Heart left ventricle (tissue), 16 donors: ENCODE measurements at regions of chr4 and their contacts with region 1.

Region 1: DNA sequence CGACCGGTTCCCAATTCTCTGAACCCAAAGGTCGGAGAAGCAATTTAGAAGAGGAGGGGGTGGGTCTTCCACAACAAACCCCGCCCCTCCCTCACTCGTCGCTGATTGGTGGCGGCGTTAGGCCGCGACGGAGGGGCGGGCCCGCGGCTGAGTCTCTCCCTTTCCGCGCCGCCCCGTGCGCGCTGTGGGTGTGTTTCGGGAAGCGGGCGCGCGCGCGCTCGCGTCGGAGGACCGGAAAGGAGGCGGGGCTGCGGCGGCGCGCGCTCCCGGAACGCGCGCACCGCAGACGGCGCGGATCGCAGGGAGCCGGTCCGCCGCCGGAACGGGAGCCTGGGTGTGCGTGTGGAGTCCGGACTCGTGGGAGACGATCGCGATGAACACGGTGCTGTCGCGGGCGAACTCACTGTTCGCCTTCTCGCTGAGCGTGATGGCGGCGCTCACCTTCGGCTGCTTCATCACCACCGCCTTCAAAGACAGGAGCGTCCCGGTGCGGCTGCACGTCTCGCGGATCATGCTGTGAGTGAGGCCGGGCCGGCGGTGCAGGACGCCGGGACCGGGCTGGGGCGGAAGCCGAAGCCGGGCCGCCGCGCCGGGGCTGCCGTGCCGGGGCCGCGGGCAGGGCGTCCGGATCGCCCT is at the start of gene SPCS3:
- DNase-seq: peak; percentile 96 to 98 (median 97)
- ATAC-seq: peak; percentile 99 to 100 (median 99)
- H3K4me3 ChIP-seq: peak within 1 kb of the TSS; percentile 73 to 95 (median 85)
- H3K27ac ChIP-seq: peak within 1 kb of the TSS; percentile 88 to 100 (median 97)
- H3K4me1 ChIP-seq: peaks cover 0 to 49% (median 36%) of the 10 kb centered on the region in 12 donors
- H3K27me3 ChIP-seq: no peaks in the 10 kb centered on the region
- CTCF ChIP-seq: no peak
- POLR2A ChIP-seq: peak; percentile 49 to 91
- total RNA-seq, gene SPCS3: 40.6 to 200 (median 81.6) TPM

Region 2: GRCh38 chr4:176185067-176185466 is 134.8 kb before region 1 on chr4:
- intact Hi-C with region 1: loop called in 2 of 10 experiments (anchors 5 to 10 kb)
- DNase-seq: no peak
- ATAC-seq: peak; percentile 47 to 86 (median 78)
- H3K4me3 ChIP-seq: no peak overlapping the region
- H3K27ac ChIP-seq: peak overlapping the region in 1 of 12 donors; percentile 28
- H3K4me1 ChIP-seq: peaks cover 0 to 7% (median 0%) of the 10 kb centered on the region in 12 donors
- H3K27me3 ChIP-seq: no peaks in the 10 kb centered on the region
- CTCF ChIP-seq: no peak
- POLR2A ChIP-seq: no peak

Region 3: GRCh38 chr4:176230836-176231235 is 89.0 kb before region 1 on chr4:
- intact Hi-C with region 1: loop called in 2 of 10 experiments (anchors 5 to 10 kb)
- DNase-seq: no peak
- ATAC-seq: peak; percentile 56 to 88 (median 68)
- H3K4me3 ChIP-seq: peak overlapping the region in 6 of 12 donors; percentile 11 to 32 (median 22)
- H3K27ac ChIP-seq: peak overlapping the region in 11 of 12 donors; percentile 11 to 79 (median 62)
- H3K4me1 ChIP-seq: peaks cover 0 to 25% (median 8%) of the 10 kb centered on the region in 12 donors
- H3K27me3 ChIP-seq: no peaks in the 10 kb centered on the region
- CTCF ChIP-seq: no peak
- POLR2A ChIP-seq: no peak

Region 4: GRCh38 chr4:176256921-176257320 is 62.9 kb before region 1 on chr4:
- intact Hi-C with region 1: no loop called
- DNase-seq: no peak
- ATAC-seq: no peak
- H3K4me3 ChIP-seq: no peak overlapping the region
- H3K27ac ChIP-seq: peak overlapping the region in 1 of 12 donors; percentile 55
- H3K4me1 ChIP-seq: no peaks in the 10 kb centered on the region
- H3K27me3 ChIP-seq: no peaks in the 10 kb centered on the region
- CTCF ChIP-seq: no peak
- POLR2A ChIP-seq: no peak

Region 5: DNA sequence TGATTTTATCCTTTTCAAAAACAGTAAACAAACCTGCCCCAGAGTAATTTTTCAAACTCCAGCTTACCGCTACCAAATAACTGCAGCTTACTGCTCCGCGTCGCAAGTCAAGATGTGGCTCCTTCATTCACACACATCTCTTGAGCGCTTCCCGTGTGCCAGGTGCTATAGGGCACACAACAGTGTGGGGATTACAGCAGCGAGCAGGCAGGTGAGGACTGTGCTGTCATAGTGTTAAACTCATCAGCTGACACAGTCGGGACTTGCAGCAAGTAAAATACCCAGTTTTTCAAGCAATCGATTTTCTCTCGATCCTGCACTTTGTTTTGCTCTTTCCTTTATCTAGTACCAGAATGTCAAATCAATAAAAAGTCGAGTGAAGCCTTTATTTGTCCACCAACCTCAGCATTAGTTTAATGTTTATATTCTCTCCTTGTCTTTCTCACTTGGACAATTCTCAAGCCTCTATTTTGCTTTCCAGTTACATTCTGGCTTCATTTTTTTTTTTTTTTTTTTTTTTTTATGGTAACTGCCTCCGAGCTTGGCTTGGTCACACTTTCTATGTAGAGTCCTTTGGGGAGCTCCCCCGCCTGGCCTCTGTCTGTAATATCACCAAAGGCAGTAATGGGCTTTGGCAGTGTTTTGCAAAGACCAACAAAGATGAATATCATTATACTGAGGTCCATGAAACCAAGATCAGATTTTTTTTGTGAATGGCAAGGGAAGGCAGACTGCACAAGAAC is 42.5 kb before region 1 on chr4:
- intact Hi-C with region 1: loop called in 1 of 10 experiments (anchors 5 kb)
- DNase-seq: peak in 4 of 5 donors; percentile 33 to 58 (median 48)
- ATAC-seq: peak in 3 of 4 donors; percentile 83 to 88 (median 83)
- H3K4me3 ChIP-seq: peak overlapping the region in 1 of 12 donors; percentile 3
- H3K27ac ChIP-seq: peak overlapping the region in 1 of 12 donors; percentile 70
- H3K4me1 ChIP-seq: peaks cover 0 to 7% (median 0%) of the 10 kb centered on the region in 12 donors
- H3K27me3 ChIP-seq: no peaks in the 10 kb centered on the region
- CTCF ChIP-seq: peak; percentile 26 to 67 (median 52)
- POLR2A ChIP-seq: no peak

Region 6: DNA sequence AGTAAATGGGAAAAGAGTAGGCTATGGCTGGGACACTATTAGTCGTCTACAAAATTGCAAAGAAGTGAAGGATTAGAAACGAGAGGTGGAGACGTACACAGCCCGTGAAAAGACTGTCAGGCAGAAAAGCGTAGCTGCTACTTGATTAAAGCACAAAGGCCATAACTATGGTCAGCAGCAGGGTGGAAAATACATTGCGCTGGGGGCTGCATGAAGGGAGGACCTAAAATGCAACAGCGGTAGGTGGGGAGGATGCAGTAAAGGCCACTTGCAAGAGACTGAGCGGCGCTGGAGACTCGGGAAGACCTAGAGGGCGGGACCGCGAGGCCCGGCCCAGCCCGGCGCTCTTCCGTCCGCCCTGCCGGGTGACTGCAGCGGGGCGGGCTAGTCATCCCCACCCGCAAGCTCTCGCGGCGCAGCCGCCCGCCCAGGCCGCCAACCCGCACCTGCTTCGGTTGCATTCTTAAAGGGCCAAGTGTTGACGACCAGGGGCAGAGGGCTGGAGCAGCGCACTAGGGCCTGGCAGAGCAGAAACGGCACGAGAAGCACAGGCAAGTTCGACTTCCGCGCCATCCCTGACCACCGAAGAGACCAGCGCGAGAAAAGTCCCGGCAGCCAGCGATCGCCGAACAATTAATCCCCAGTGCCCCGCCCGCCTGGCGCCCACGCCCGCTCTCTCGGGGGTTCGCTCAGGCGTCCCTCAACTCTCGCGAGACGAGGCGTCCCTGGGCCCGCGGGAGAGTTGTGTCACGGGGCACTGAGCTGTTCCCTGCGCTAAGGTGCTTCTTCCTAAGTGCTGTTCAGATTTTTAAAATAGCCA is 1122.2 kb after region 1 on chr4 and contains the start of gene AGA:
- intact Hi-C with region 1: loop called in 1 of 10 experiments (anchors 5 kb)
- DNase-seq: peak; percentile 97 to 98 (median 98)
- ATAC-seq: peak; percentile 98 to 99 (median 99)
- H3K4me3 ChIP-seq: peak within 1 kb of the TSS; percentile 28 to 87 (median 73)
- H3K27ac ChIP-seq: peak within 1 kb of the TSS; percentile 88 to 97 (median 94)
- H3K4me1 ChIP-seq: peaks cover 0 to 16% (median 7%) of the 10 kb centered on the region in 12 donors
- H3K27me3 ChIP-seq: no peaks in the 10 kb centered on the region
- CTCF ChIP-seq: peak in 2 of 12 donors; percentile 9 to 30
- POLR2A ChIP-seq: peak in 1 of 2 donors; percentile 51
- total RNA-seq, gene AGA: 5.7 to 13.4 (median 8.8) TPM